Lower leg skin (tissue), 4 donors: ENCODE measurements at regions of chr11 and their contacts with region 1.

Region 1: DNA sequence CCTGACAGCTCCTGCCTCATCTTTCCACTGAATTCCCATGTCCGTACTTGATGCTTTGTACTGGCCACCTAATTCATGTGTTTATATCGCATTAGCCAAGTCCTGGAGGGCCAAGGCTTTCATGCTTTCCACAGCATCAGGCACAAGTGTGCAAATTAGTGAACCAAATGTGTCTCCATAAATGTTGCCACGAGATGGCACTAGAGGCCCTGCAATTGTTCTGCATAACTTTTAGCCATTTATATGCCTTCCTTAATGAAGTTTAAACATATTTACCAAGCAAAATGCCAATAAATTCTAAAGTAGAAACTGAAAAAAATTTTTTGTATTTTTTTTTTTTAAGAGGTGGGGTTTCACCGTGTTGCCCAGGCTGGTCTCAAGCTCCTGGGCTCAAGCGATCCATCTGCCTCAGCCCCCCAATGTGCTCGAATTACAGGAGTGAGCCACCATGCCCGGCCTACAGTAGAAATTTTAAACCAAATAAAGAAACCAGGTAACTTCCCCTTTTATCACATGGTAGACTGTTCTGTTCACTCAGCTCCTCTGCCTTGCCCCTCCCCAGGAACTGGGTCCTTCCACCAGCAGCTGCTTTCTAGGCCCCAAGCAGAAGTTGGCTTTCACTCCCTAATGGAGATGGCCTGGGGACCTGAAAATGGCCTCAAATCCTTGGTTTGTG is 20.8 kb upstream of the IL18BP start:
- DNase-seq: peak in 1 of 2 donors; percentile 52
- H3K4me3 ChIP-seq: no peak overlapping the region
- CTCF ChIP-seq: no peak
- POLR2A ChIP-seq: no peak

Region 2: DNA sequence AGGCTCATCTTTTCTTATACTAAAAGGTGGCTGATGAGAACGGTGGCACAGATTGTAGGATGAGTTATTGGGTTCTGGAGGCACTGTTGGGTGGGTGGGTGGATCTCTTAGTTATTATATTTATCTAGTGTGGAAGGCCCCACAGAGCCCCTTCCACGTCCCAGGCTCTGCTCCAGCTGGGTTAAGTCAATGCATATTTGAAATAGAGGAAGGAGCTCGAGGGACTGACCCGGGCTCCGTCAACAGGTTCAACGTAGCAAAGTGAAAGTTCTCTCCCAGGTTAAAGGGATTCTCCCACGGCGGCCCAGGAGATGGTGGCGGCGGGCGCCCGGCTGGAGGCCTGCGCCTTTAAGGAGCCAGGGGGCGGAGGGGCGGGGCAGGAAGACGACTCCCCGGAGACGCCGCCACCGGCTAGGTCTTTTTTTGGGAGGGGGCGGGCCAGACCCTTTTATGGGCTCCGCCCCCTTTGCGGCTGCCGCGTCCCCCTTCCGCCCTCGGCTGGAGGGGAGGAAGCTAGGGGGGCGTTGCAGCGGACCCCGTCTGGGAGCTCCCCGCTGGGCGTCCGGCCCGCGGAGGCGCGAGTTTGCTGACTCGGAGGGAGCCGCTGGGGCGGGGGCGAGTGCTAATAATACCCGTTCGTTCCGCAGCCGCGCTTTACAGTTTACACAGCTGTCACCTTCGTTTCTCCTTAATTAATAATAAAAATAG is 245.2 kb after region 1 on chr11:
- intact Hi-C with region 1: no loop called
- DNase-seq: peak; percentile 93 to 98
- H3K4me3 ChIP-seq: peak overlapping the region; percentile 64
- CTCF ChIP-seq: no peak
- POLR2A ChIP-seq: no peak

Region 3: DNA sequence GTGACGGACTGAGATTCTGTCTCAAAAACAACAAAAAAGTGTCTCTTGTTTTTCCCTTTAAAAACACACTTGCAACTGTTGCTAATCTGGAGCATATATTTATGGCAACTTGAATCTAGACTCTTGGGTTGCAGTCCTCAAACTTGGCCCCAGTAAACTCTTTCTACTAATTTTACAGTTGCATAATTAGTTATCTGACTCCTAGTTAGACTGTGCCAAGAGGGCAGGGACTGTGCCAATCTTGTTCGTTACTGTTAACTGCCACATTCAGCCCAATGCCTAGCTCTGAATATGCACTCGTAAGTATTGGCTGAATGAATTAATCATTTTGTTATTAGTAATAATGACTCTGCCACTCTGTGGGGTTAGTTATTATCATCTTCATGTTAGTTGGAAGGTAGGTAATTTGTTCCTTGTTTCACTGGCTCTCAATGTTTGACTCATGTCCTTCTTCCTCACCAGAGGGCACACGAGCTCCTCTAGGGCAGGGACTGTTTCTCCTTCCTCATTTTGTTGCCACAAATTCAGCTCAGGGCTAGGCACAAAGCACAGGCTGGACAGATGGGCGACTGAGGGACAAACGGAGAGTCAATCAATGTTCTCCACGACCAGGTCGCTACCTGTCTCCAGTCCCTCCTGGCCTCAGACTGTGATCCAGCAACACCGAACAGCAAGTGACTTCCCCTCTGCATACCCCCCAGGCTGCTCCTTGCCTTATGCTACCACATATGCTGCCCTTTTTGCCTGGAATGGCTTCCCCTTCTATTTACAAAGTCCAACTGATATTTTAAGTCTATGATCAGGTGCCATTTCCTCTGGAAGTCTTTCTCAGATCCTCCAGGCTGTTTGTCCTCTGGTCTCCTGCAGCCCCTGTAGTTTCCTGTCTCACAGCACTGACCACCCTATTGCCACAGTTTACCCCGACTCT is 447.4 kb after region 1 on chr11:
- intact Hi-C with region 1: loop called (anchors 5 kb)
- DNase-seq: no peak
- H3K4me3 ChIP-seq: no peak overlapping the region
- CTCF ChIP-seq: no peak
- POLR2A ChIP-seq: no peak